Ascending aorta (tissue), 2 donors: ENCODE measurements at regions of chr17 and their contacts with region 1.

Region 1: DNA sequence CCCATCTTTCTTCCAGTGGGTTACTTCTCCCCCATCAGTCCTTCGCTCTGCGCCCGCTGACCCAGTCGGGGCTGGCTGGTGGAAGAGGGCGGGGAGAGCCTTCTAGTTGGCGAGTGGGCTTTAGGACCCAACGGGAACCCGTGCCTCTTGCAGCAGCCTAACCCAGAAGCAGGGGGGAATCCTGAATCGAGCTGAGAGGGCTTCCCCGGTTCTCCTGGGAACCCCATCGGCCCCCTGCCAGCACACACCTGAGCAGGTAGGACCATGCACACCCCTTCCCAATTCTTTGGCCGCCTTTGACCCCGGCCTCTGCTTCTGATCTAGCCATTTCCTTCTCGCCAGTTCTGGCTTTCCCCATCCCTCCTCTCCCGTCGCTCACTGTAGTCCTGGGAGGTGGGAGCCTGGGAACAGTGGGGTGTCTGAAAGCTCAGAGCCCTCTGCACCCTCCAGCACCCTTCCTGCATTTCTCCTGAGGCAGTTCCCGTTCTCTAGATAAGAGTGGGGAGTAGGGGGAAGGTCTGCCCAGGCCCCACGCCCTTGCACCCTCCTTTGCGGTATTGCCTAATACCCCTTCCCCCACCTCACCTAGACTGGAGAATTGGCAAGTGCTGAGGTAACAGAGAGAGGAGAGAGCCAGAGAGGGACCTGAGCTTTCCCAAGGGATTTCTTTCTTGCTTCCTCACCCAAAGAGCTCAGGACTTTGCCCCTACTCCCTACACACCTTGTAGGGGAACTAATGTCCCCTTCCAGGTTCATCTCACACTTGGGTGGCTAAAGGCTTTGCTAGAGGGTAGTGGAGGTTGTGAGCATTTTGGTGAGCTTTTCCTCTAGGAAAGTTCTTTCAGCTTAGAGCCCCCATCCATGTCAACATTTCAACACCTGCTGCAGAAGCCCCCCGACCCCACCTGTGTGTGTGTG is at the start of gene RARA:
- DNase-seq: peak in 1 of 2 donors; percentile 82
- H3K4me3 ChIP-seq: peak within 1 kb of the TSS; percentile 35 to 61
- H3K27ac ChIP-seq: peak within 1 kb of the TSS; percentile 82 to 91
- H3K4me1 ChIP-seq: peaks cover 50 to 61% of the 10 kb centered on the region in 2 donors
- H3K27me3 ChIP-seq: no peaks in the 10 kb centered on the region
- CTCF ChIP-seq: no peak
- total RNA-seq, gene RARA: 77.3 TPM

Region 2: GRCh38 chr17:40268141-40268712 is 41.1 kb before region 1 on chr17:
- intact Hi-C with region 1: no loop called
- DNase-seq: no peak
- H3K4me3 ChIP-seq: no peak overlapping the region
- H3K27ac ChIP-seq: no peak overlapping the region
- H3K4me1 ChIP-seq: no peaks in the 10 kb centered on the region
- H3K27me3 ChIP-seq: no peaks in the 10 kb centered on the region
- CTCF ChIP-seq: no peak

Region 3: GRCh38 chr17:40427002-40427491 is 117.8 kb after region 1 on chr17:
- intact Hi-C with region 1: no loop called
- DNase-seq: peak in 1 of 2 donors; percentile 19
- H3K4me3 ChIP-seq: no peak overlapping the region
- H3K27ac ChIP-seq: no peak overlapping the region
- H3K4me1 ChIP-seq: no peaks in the 10 kb centered on the region
- H3K27me3 ChIP-seq: no peaks in the 10 kb centered on the region
- CTCF ChIP-seq: no peak

Region 4: GRCh38 chr17:40536295-40537171 is 227.2 kb after region 1 on chr17:
- intact Hi-C with region 1: loop called (anchors 5 kb)
- DNase-seq: peak in 1 of 2 donors; percentile 77
- H3K4me3 ChIP-seq: no peak overlapping the region
- H3K27ac ChIP-seq: peak overlapping the region; percentile 58 to 84
- H3K4me1 ChIP-seq: peaks cover 5 to 16% of the 10 kb centered on the region in 2 donors
- H3K27me3 ChIP-seq: no peaks in the 10 kb centered on the region
- CTCF ChIP-seq: no peak

Region 5: GRCh38 chr17:40664582-40665333 is 355.5 kb after region 1 on chr17 and contains the start of gene KRT222:
- intact Hi-C with region 1: no loop called
- DNase-seq: no peak
- H3K4me3 ChIP-seq: no peak within 1 kb of the TSS
- H3K27ac ChIP-seq: no peak within 1 kb of the TSS
- H3K4me1 ChIP-seq: no peaks in the 10 kb centered on the region
- H3K27me3 ChIP-seq: no peaks in the 10 kb centered on the region
- CTCF ChIP-seq: no peak
- total RNA-seq, gene KRT222: 3.4 TPM